IMR-90 (cell line): ENCODE measurements at regions of chr14 and their contacts with region 1.

Region 1: DNA sequence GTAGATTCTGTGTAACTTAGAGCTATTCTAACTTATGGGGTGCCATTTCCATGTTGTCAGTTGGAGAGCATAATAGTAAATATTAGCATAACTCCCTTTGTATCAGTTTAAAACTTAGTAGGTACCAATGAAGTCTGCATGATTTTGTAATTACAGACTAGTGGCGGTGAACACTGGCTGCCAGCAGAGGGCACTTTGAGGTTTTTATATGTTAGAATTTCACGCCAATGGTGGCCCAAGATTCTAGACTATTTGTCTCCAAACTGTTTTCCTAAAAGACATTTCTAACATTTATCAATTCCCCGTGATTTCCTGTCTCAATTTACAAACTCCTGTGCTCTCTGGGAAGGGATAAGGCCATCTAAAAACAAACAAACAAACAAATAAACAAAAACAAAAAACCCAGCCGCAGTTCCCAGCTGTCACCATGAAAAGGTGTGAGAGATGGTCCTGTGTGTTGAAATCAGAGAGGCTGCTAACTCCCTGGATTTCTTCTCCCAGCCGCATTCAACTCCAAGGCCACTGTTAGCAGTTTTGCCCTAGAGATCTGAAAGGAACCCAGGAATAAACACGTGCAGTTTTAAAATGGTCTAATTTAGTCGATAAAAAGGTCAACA is 57.6 kb downstream of the BRMS1L start:
- DNase-seq: peak; percentile 18
- ATAC-seq: peak; percentile 59
- H3K4me3 ChIP-seq: no peak overlapping the region
- H3K27ac ChIP-seq: no peak overlapping the region
- H3K4me1 ChIP-seq: peaks cover 2% of the 10 kb centered on the region
- H3K27me3 ChIP-seq: no peaks in the 10 kb centered on the region; the same call in 1 of the 2 replicates
- CTCF ChIP-seq: peak; percentile 65
- POLR2A ChIP-seq: no peak
- RAD21 ChIP-seq: peak; percentile 33

Region 2: DNA sequence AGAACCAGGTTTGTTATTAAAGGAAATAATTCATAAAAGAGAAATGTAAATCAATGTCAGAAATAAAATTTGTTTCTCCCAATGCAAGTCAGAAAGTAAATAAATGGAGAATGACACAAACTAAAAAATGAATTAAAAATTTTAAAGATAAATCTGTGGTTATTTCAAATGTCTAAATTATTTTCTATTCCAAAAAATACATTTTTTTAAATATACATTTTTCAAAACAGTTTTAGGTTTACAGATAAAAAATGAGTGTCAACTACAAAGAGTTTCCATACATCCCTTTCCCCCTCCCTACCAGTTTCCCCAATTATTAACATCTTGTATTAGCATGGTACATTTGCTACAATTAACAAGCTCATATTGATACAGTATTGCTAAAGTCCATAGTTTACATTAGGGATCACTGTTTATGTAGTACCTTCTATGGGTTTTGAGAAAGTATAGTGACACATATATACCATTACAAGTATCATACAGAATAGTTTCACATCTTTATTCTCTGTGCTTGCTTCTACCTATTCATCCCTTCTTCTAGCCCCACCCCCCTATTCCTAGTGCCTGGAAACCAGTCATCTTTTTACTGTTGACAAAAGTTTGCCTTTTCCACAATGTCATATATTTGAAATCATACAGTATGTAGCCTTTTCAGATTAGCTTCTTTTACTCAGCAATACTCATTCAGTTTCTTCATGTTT is 178.8 kb before region 1 on chr14:
- CTCF ChIA-PET with region 1: no interaction called
- POLR2A ChIA-PET with region 1: no interaction called
- dilution Hi-C with region 1: no loop called
- in situ Hi-C with region 1: no loop called
- intact Hi-C with region 1: no loop called
- DNase-seq: no peak
- ATAC-seq: no peak
- H3K4me3 ChIP-seq: no peak overlapping the region
- H3K27ac ChIP-seq: no peak overlapping the region
- H3K4me1 ChIP-seq: no peaks in the 10 kb centered on the region
- H3K27me3 ChIP-seq: no peaks in the 10 kb centered on the region
- CTCF ChIP-seq: no peak
- POLR2A ChIP-seq: no peak
- RAD21 ChIP-seq: no peak

Region 3: DNA sequence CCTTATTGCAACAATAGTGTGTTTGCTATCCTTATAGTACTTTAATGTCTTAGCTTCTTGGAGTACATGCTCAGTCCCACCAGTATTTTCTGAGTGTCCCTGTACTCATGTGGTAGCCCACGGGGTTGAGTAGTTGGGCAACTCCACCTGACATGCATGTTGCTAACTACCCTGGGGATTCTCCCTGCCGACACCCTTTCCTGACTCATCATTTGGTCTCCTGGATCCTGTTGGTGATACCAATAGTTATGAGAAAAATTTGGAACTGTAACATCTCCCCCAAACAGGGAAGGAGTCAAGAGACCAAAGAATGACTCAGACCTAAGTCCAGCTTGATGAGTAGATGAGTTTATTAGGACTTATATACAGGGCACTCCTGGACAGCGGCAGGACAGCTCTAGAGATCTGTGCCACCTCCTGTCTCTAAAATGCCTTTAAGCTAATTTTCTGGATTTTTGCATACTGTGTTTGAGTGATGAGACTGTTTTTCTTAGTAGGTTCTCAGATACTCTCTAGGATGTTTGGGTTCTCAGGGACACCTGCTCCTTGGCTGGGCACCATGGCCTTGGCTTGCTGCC is 44.0 kb after region 1 on chr14:
- CTCF ChIA-PET with region 1: no interaction called
- POLR2A ChIA-PET with region 1: no interaction called
- dilution Hi-C with region 1: no loop called
- in situ Hi-C with region 1: no loop called
- intact Hi-C with region 1: loop called (anchors 1 kb)
- DNase-seq: no peak
- ATAC-seq: no peak
- H3K4me3 ChIP-seq: no peak overlapping the region
- H3K27ac ChIP-seq: no peak overlapping the region
- H3K4me1 ChIP-seq: no peaks in the 10 kb centered on the region
- H3K27me3 ChIP-seq: peaks cover 3% of the 10 kb centered on the region; the same call in 1 of the 2 replicates
- CTCF ChIP-seq: no peak
- POLR2A ChIP-seq: no peak
- RAD21 ChIP-seq: no peak

Region 4: DNA sequence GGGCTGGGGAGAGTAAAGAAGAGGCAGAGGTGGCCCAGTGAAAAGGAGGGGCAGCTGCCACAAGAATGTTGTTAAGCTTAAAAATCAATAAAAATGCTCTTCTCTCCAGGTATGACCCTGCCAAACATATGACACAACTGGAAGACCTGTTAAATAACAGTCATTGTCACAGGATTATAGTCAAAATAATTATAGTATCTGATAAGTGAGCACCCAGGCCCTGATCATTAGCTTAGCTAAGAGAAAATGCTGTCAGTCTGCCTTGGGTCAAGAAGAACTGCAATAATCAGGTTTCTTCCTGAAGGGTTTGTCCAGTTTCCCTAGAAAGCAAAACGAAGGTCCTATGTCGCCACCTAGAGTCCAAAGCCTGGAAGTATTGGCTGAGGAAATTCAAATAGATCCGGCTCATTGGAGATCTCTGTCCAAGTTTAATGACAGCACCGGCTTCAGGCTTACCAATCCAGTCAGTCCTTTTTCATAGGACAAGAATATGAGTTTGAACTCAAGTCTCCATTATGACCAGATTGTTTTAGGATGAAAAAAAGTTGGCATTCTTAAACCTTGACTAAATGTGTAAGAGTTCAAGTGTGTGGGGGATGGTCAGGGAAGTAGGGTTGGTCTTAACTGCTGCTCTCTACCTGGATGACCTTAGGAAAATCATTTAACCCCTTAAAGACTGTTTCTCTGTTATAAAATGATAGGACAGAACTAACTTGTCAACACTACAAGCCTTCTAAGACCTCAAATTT is 721.1 kb after region 1 on chr14:
- CTCF ChIA-PET with region 1: no interaction called
- POLR2A ChIA-PET with region 1: no interaction called
- dilution Hi-C with region 1: no loop called
- in situ Hi-C with region 1: no loop called
- intact Hi-C with region 1: loop called (anchors 2 kb)
- DNase-seq: peak; percentile 66
- ATAC-seq: peak; percentile 64
- H3K4me3 ChIP-seq: no peak overlapping the region
- H3K27ac ChIP-seq: no peak overlapping the region
- H3K4me1 ChIP-seq: no peaks in the 10 kb centered on the region
- H3K27me3 ChIP-seq: peaks cover 2% of the 10 kb centered on the region
- CTCF ChIP-seq: peak; percentile 70
- POLR2A ChIP-seq: no peak
- RAD21 ChIP-seq: peak; percentile 65